Aorta (tissue), 5 donors: ENCODE measurements at regions of chrX and their contacts with region 1.

Region 1: DNA sequence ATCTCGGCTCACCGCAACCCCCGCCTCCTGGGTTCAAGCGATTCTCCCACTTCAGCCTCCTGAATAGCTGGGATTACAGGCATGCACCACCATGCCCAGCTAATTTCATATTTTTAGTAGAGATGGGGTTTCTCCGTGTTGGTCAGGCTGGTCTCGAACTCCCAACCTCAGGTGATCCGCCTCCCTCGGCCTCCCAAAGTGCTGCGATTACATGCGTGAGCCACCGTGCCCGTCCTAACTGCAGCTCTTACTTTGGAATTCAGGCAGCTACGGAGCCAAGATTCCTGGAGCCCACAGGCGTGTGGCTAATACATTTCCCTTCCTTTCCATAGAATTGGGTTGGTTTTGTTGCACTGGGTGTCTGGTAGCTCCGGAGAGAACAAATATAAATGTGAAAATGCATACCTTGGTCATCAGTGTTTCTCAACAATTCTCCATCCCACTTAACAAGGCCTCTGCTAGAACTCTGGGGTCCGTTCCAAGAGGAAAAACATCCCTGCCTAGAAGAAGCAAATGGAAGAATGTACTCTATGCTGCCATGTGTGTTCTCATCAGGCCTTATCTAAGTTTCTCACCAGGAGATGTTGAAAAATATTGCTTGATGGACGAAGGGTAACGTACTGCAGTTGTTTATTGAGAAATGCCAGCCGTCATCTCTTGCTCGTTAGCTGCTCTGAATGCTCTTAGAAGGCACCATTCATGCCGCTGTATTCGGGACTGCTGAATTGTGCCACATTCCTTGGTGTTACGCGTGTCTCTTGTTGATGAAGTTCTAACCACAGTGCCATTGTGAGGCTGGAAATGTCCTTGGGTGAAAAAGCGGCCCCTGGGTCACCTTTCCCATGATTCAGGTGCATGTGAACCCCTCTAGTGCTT is 50.6 kb upstream of the CD99 start:
- DNase-seq: no peak
- ATAC-seq: no peak
- H3K4me3 ChIP-seq: no peak overlapping the region
- H3K27ac ChIP-seq: no peak overlapping the region
- H3K4me1 ChIP-seq: no peaks in the 10 kb centered on the region
- H3K27me3 ChIP-seq: no peaks in the 10 kb centered on the region

Region 2: DNA sequence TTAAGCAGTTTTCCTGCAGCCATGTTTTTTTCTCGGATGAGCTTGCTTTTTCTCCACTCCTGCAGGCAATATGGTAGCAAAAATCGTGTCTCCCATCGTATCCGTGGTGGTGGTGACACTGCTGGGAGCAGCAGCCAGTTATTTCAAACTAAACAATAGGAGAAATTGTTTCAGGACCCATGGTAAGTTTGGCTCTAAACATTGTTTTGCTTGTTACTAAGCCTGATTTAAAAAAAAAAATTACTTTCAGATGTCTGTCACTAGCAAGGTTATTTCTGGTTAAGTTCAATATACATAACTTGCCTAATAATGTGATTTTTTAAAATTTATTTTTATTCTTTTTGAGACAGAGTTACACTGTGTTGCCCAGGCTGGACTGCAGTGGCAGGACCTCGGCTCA is 170.8 kb after region 1 on chrX:
- intact Hi-C with region 1: loop called (anchors 5 to 10 kb)
- DNase-seq: no peak
- ATAC-seq: no peak
- H3K4me3 ChIP-seq: no peak overlapping the region
- H3K27ac ChIP-seq: no peak overlapping the region
- H3K4me1 ChIP-seq: no peaks in the 10 kb centered on the region
- H3K27me3 ChIP-seq: no peaks in the 10 kb centered on the region

Region 3: DNA sequence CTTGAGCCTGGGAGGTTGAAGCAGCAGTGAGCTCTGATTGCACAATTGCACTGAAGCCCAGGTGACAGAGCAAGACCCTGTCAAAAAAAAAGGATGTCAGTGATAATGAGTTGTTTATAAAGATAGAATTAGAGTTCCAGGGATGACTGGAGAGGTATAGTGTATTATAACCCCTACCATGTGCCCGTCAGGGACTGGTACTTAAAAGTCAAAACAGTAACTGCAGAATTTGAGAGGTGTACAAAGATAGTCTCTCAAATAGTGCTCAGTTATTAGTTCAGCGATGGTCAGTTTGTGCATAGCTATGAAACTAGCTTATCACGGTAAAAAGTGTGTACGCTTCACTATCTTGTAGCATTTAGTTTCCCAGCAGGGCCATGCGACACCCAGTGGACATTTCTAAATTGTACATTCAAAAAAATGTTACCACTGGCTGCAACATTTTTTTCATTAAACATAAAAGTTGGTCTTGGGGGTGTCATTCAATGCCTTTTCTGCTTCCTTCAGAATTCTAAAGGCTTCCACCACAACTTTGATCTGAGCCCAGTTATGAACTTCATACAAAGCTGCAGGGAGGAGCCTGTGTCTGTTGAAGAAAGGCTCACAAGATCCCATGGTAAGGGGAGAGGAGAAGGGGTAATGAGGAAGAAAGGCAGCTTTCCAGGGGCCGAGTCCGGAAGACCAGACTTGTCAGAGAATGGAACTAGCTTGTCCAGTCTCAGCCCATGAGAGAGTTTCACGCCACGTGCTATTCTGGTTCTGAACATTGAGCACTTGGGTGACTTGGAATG is 179.0 kb after region 1 on chrX:
- intact Hi-C with region 1: loop called (anchors 5 to 10 kb)
- DNase-seq: no peak
- ATAC-seq: no peak
- H3K4me3 ChIP-seq: no peak overlapping the region
- H3K27ac ChIP-seq: no peak overlapping the region
- H3K4me1 ChIP-seq: no peaks in the 10 kb centered on the region
- H3K27me3 ChIP-seq: peaks cover 0 to 4% of the 10 kb centered on the region in 2 donors